ENCODE measurements at regions of chr11 and their contacts with region 1.

Region 1: DNA sequence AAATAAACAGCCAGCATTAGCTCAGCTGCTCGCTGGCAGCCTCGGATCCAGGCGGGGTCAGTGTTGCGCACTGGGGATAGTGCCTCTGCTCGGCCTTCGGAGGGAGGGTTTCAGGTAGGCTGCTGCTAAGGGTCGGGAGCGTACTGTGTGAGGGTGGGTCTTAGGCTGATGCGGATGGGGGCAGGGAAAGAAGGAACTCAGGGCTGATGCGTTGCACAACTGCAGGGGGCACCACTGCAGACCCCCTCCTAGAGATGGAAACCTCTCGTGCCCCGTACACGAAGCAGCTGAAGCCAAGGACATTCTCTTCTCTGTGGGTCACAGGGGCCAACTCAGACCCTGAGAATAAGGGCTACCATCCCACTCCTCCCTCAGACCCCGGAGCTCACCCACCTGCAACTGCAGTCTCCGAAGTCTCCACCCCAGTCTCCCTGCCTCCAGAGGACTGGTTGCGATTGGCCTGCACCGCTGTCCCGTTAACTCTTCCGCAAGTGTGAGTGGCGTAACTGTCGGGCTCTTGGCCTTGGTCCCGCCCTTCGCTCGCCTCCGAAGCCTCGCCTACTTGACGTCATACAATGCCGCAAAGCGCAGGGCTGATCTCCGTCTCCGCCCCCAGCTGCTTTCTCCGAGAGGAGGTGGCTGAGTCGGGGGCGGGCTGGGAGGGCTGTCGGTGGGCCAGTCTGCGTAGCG is at the start of gene KBTBD3:
- DNase-seq: peak; percentile 99
- H3K4me3 ChIP-seq: peak within 1 kb of the TSS; percentile 66 to 72 (median 69)
- H3K27ac ChIP-seq: peak within 1 kb of the TSS; percentile 93 to 97 (median 95)
- H3K4me1 ChIP-seq: peaks cover 24 to 59% (median 52%) of the 10 kb centered on the region in 4 donors
- H3K27me3 ChIP-seq: no peaks in the 10 kb centered on the region
- CTCF ChIP-seq: peak in 2 of 3 experiments; percentile 23 to 30
- EP300 ChIP-seq: no peak
- POLR2A ChIP-seq: peak; percentile 83
- total RNA-seq, gene KBTBD3: 3.6 to 8.3 (median 6.6) TPM

Region 2: DNA sequence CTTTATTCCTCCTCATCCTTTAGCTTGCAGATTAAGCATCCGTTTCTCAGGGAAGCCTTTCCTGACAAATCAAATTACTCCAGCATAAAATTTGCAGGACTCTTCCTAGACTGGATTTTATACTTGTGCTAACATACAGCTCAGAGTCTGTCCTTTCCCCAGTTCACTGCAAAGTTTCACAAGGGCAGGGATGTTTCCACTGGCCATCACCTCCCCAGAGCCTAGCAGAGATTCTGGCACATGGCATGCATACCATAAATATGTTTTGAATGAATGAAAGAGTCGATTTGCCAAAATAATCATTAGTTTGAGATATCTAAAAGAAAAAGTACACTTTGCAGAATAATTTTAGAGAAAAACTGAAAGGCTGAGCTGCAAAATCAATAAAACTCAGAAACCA is 65.6 kb before region 1 on chr11:
- intact Hi-C with region 1: no loop called
- DNase-seq: no peak
- H3K4me3 ChIP-seq: no peak overlapping the region
- H3K27ac ChIP-seq: no peak overlapping the region
- H3K4me1 ChIP-seq: peaks cover 5 to 55% (median 36%) of the 10 kb centered on the region in 4 donors
- H3K27me3 ChIP-seq: no peaks in the 10 kb centered on the region
- CTCF ChIP-seq: no peak
- EP300 ChIP-seq: no peak
- POLR2A ChIP-seq: no peak

Region 3: DNA sequence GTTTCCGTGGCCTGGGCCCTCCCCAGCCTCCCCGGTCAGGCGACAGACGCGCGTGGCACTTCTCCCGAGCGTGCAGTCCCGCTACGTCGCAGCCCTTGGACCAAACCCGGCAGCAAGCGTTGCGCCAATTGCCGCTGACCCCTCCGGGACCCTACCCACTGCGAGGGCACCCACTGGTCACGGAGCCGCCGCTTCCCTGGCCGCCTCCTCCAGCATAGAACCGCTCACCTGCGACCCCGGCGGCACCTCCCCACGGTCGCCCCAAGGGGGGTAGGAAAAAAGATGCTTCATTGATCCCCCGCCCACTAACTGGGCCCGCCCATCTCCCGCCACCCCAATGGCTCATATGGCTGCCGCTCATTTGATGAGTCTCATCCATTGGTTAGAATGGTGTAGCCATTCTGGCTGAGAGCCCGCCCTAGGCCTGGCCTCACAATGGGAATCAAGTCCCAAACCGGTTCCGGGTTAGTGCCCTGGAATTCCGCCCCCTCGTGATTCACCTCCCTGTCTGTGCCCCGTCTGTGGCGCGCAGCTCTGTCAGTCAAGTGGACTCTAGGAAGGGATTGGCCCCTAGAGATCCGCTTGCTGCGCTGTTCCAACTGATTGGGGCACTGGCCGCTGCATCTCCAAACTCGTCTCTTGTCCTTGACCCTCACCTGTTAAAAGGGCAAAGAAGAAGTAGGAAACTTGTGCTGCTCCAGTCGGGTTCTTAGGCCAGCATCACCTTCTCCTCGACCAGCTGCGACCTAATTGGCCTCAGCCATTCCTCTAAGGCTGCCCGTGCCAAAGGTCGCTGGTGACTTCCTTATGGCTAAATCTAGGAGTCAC is 54.9 kb before region 1 on chr11 and contains the start of gene MSANTD4:
- intact Hi-C with region 1: loop called (anchors 5 kb)
- DNase-seq: peak; percentile 100
- H3K4me3 ChIP-seq: peak within 1 kb of the TSS; percentile 65 to 91 (median 81)
- H3K27ac ChIP-seq: peak within 1 kb of the TSS; percentile 82 to 86 (median 84)
- H3K4me1 ChIP-seq: peaks cover 29 to 43% (median 38%) of the 10 kb centered on the region in 4 donors
- H3K27me3 ChIP-seq: no peaks in the 10 kb centered on the region
- CTCF ChIP-seq: peak in 2 of 3 experiments; percentile 4 to 18
- EP300 ChIP-seq: no peak
- POLR2A ChIP-seq: peak; percentile 22
- total RNA-seq, gene MSANTD4: 22.5 to 32.8 (median 25.6) TPM

Region 4: DNA sequence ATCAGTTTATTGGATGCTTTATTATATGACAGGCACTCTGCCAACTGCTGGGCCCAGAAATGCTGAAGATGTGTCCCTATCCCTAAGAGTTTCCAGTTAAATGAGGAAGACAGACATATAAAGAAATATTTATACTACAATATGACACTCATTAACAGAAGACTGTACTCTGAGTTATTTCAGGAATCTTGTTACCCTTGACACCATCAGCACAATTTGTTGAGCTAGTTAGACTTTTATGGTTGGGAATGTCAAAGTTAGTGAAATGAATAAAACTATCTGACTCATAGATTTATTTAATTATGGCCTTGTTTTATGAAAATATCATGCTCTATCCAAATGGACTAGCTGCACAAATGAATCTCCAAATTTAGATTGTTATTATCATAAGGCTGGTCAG is 29.4 kb before region 1 on chr11:
- intact Hi-C with region 1: no loop called
- DNase-seq: no peak
- H3K4me3 ChIP-seq: no peak overlapping the region
- H3K27ac ChIP-seq: peak overlapping the region in 3 of 4 donors; percentile 4 to 51 (median 38)
- H3K4me1 ChIP-seq: peaks cover 5 to 30% (median 10%) of the 10 kb centered on the region in 4 donors
- H3K27me3 ChIP-seq: no peaks in the 10 kb centered on the region
- CTCF ChIP-seq: no peak
- EP300 ChIP-seq: no peak
- POLR2A ChIP-seq: no peak

Region 5: DNA sequence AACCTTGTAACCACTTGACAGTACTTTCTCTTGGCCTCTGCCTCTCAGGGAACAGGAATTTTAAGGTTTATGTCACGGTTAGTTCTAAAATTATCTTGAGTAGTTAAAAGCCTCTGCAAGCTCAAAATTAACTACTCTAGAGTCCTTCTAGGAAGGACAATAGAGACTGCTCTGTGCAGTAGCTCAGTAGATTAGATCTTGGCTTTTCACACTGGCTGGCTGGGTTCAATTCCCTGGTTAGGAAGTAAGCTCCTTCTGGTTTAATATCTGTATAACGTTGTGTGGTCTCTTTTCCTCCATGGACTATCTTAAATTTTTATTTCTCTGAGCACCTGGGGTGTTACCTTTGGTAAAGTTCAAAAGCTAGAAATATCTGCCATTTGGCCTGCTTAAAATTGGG is 109.6 kb after region 1 on chr11:
- intact Hi-C with region 1: no loop called
- DNase-seq: no peak
- H3K4me3 ChIP-seq: no peak overlapping the region
- H3K27ac ChIP-seq: no peak overlapping the region
- H3K4me1 ChIP-seq: no peaks in the 10 kb centered on the region
- H3K27me3 ChIP-seq: no peaks in the 10 kb centered on the region
- CTCF ChIP-seq: no peak
- EP300 ChIP-seq: no peak
- POLR2A ChIP-seq: no peak

Measured in esophagus muscularis mucosa (tissue), 4 donors.